MCF 10A (cell line): ENCODE measurements at regions of chr13 and their contacts with region 1.

Region 1: GRCh38 chr13:43303033-43303729 is 279.8 kb downstream of the DNAJC15 start:
- DNase-seq: peak; percentile 35
- H3K4me3 Mint-ChIP-seq: no peak overlapping the region
- H3K27ac Mint-ChIP-seq: no peak overlapping the region
- H3K4me1 Mint-ChIP-seq: peaks cover 42% of the 10 kb centered on the region
- H3K27me3 Mint-ChIP-seq: no peaks in the 10 kb centered on the region
- CTCF ChIP-seq: peak; percentile 27

Region 2: GRCh38 chr13:42821437-42821836 is 481.7 kb before region 1 on chr13:
- CTCF ChIA-PET with region 1: no interaction called
- POLR2A ChIA-PET with region 1: no interaction called
- intact Hi-C with region 1: no loop called
- DNase-seq: peak; percentile 73
- H3K4me3 Mint-ChIP-seq: no peak overlapping the region
- H3K27ac Mint-ChIP-seq: no peak overlapping the region
- H3K4me1 Mint-ChIP-seq: peaks cover 8% of the 10 kb centered on the region
- H3K27me3 Mint-ChIP-seq: no peaks in the 10 kb centered on the region
- CTCF ChIP-seq: no peak

Region 3: DNA sequence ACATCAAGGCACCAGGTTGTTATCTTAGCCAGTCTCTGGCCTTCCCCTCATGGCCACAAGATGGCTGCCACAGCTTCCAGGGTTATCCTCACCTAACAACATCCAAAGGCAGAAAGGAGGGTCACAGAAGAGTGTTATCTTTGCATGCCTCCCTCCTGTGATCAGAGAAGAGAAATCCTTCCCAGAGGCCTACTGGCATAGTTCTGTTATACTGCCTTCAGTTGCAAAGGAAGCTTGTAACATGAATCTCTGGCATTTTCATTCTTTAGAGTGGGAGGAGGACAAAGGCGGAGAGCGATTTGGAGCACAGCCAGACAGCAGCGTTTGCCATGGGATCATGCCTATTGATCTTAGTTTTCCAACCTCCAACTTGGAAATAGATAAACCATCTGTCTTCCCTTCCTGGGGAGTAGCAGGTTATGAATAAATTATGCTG is 144.1 kb before region 1 on chr13:
- CTCF ChIA-PET with region 1: no interaction called
- POLR2A ChIA-PET with region 1: no interaction called
- intact Hi-C with region 1: loop called (anchors 10 kb)
- DNase-seq: peak; percentile 50
- H3K4me3 Mint-ChIP-seq: no peak overlapping the region
- H3K27ac Mint-ChIP-seq: no peak overlapping the region
- H3K4me1 Mint-ChIP-seq: peaks cover 16% of the 10 kb centered on the region
- H3K27me3 Mint-ChIP-seq: no peaks in the 10 kb centered on the region
- CTCF ChIP-seq: no peak

Region 4: GRCh38 chr13:43786773-43787517 is 483.8 kb after region 1 on chr13 and contains the start of gene ENOX1:
- CTCF ChIA-PET with region 1: interaction called, 3 read pairs
- POLR2A ChIA-PET with region 1: no interaction called
- intact Hi-C with region 1: loop called (anchors 1 kb)
- DNase-seq: peak; percentile 60
- H3K4me3 Mint-ChIP-seq: peak within 1 kb of the TSS; percentile 80
- H3K27ac Mint-ChIP-seq: peak within 1 kb of the TSS; percentile 23
- H3K4me1 Mint-ChIP-seq: peaks cover 20% of the 10 kb centered on the region
- H3K27me3 Mint-ChIP-seq: no peaks in the 10 kb centered on the region
- CTCF ChIP-seq: peak; percentile 12
- total RNA-seq, gene ENOX1: 1.5 and 1.8 TPM in 2 replicates

Region 5: DNA sequence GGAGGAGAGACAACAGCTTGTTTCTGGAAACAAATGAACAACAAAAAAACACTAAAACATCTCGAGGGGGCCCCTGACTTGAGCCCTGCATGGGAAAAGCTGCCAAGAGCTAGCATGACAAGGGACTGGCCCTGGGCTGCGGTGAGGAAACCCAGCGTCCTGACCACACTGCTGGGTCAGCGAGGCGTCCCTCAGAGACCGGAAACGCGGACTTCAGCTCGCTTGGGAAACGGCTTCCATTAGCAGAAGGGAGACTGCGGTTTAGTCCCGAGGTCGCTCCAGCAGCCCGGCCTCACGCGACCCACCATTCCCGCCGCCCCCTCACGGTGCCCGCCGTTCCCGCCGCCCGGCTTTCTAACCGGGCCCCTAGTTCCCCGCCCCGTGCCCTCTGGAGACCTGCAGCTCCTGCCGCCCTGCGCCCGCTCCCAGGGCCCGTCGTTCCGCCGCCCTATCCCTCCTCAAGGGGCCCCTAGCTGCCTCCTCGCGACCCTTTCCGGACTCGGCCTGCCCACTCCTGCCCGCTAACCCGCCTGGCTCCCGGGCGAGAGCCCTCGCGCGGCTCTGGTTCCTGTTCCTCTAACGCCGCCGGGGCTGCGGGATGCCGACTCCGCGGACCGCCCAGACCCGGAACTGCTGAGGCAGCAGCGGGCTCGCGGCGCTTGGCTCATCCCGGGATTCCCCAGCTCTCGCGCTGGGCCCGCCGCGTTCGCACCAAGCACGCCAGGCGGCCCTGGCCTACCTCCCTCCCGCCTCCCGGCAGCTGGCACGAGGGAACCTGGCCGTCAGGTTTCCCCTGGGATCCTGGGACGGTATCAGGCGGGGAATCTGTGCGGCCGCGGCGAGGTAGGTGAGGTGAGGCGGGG is 575.9 kb after region 1 on chr13 and contains the start of gene CCDC122:
- CTCF ChIA-PET with region 1: no interaction called
- POLR2A ChIA-PET with region 1: no interaction called
- intact Hi-C with region 1: loop called (anchors 5 kb)
- DNase-seq: peak; percentile 83
- H3K4me3 Mint-ChIP-seq: peak within 1 kb of the TSS; percentile 93
- H3K27ac Mint-ChIP-seq: peak within 1 kb of the TSS; percentile 98
- H3K4me1 Mint-ChIP-seq: peaks cover 23% of the 10 kb centered on the region
- H3K27me3 Mint-ChIP-seq: no peaks in the 10 kb centered on the region
- CTCF ChIP-seq: no peak
- total RNA-seq, gene CCDC122: 15.7 and 16.3 TPM in 2 replicates